ENCODE measurements at regions of chr17 and their contacts with region 1.

Region 1: DNA sequence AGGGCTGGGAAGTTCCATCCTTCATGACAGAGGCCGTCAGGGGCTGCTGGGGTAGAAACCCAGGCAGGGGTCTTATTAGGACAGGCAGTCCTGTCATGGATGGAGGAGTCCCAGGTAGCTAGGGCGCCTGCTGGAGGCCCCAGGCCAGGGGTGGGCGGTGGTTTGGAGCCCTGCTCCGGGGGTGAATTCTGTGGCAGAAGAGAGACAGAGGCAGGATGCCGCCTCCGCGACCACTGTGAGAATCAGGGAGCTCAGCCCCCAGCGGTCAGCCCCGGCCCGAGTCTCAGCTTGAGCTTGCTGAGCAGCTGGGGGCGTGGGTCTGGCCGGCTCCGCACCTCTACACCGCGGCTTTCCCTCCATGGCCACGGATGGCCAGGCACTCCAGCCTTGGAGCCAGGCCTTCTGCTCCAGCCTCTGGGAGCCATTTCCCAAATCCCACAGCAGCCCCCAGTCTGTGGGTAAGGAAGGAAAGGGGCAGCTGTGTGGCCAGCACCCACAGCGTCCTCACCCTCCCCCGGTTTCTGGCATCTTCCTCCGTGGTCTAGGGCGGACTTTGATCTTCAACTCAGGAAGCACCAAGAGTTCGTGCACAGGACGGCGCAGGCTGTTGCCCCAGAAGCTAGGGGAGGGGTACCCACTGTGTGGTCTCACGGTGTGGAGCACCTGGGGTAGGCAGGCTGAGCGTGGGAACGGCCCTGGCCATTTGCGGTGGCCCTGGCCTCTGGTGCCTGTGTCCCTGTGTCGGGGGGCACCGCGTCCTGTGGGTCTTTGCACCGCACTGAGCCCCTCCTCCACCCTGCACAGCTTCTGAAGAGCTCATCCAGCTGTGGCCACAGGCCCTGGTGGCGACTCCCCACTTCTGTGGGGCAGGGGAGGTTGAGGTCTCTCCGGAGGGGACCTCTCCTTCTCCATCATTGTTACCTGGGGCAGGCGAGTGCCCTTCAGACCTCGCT is 14.1 kb downstream of the CD7 start:
- DNase-seq: peak in 2 of 3 donors; percentile 50 to 64
- H3K4me3 ChIP-seq: peak overlapping the region in 3 of 7 experiments; percentile 24 to 55 (median 43)
- H3K27ac ChIP-seq: no peak overlapping the region
- H3K4me1 ChIP-seq: peaks cover 5 to 85% (median 82%) of the 10 kb centered on the region in 4 experiments
- H3K27me3 ChIP-seq: no peaks in the 10 kb centered on the region

Region 2: DNA sequence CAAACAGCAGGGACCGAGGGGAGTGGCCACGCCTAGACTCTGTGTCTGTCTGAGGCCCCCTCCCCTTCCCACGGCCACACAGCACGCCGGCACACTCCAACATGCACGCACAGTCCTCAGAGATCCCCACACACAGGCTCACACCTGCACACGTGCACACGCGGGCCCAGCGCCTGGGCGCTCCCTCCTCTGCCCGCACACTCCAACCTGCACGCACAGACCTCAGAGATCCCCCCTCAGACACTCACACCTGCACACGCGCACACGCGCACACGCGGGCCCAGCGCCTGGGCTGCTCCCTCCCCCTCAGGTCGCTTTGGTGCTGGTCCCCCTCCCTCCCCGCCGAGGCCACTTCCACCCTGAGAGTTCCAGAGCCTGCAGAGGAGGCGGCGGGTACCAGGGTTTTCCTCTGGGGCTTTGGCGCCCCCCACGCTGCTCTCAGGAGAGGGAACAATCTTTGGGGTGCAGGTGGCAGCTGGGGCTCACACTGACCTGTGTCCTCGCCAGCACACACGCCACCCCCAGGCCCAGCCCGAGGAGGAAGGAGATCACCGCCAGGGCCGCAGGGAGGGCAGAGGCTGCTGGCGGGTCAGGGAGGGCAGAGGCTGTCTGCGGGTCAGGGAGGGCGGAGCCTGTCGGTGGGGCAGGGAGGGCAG is 12.6 kb after region 1 on chr17:
- CTCF ChIA-PET with region 1: interaction called, 136 read pairs
- POLR2A ChIA-PET with region 1: interaction called, 5 read pairs
- DNase-seq: peak in 1 of 3 donors; percentile 61
- H3K4me3 ChIP-seq: peak overlapping the region in 4 of 7 experiments; percentile 26 to 64 (median 45)
- H3K27ac ChIP-seq: no peak overlapping the region
- H3K4me1 ChIP-seq: peaks cover 0 to 43% (median 32%) of the 10 kb centered on the region in 4 experiments
- H3K27me3 ChIP-seq: no peaks in the 10 kb centered on the region

Measured in common myeloid progenitor, CD34-positive (primary cell).